A549 (cell line): ENCODE measurements at regions of chr16 and their contacts with region 1.

Region 1: DNA sequence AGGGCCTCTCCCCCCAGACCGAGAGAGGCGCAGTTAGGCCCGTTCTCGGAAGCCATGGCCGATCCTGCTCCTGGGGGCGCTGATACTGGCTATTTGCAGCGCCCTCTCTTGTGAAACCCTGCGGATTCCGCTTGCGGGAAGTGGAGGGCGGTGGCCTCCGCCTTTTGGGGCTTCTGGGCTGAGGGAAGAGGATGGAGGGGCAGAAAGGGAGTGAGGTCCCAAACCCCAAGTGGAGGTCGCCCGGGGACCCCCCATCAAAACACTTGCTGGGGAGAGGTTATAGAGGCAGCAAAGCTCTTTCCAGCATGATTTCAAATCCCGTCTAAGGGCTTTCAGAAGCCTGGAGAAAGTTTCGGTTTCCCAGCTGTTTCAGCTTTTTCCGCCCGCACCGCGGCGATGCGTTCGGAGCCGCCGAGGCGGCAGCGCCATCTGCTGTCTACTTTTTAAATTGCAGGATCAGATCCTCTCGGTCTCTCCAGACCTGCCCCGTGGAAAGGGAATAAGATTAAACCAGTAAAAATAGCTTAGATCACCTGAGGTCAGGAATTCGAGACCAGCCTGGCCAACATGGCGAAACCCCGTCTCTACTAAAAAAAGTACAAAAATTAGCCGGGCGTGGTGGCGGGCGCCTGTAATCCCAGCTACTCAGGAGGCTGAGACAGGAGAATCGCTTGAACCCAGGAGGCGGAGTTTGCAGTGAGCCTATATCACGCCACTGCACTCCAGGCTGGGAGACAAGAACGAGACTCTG is 15.8 kb downstream of the SNX20 start:
- DNase-seq: peak; percentile 56 to 74
- ATAC-seq: peak; percentile 81 to 95
- H3K4me3 ChIP-seq: peak overlapping the region; percentile 26; the same call in 1 of the 3 replicates
- H3K27ac ChIP-seq: peak overlapping the region in 1 of 2 experiments; percentile 53; a peak in 3 of 6 replicates
- H3K4me1 ChIP-seq: no peaks in the 10 kb centered on the region
- CTCF ChIP-seq: peak; percentile 88
- EP300 ChIP-seq: no peak
- POLR2A ChIP-seq: no peak
- RAD21 ChIP-seq: peak; percentile 80 to 85

Region 2: GRCh38 chr16:50326949-50327402 is 338.3 kb before region 1 on chr16:
- CTCF ChIA-PET with region 1: interaction called, 16 read pairs
- POLR2A ChIA-PET with region 1: no interaction called
- DNase-seq: peak in 1 of 2 experiments; percentile 58
- ATAC-seq: peak; percentile 75 to 89; a peak in 5 of 6 replicates
- H3K4me3 ChIP-seq: no peak overlapping the region
- H3K27ac ChIP-seq: no peak overlapping the region
- H3K4me1 ChIP-seq: no peaks in the 10 kb centered on the region
- CTCF ChIP-seq: peak; percentile 46
- EP300 ChIP-seq: no peak
- POLR2A ChIP-seq: no peak
- RAD21 ChIP-seq: peak; percentile 40 to 56; a peak in 4 of 5 replicates

Region 3: GRCh38 chr16:50611332-50611934 is 53.9 kb before region 1 on chr16:
- CTCF ChIA-PET with region 1: interaction called, 13 read pairs
- POLR2A ChIA-PET with region 1: no interaction called
- DNase-seq: no peak
- ATAC-seq: peak in 1 of 2 experiments; percentile 55; a peak in 3 of 6 replicates
- H3K4me3 ChIP-seq: no peak overlapping the region
- H3K27ac ChIP-seq: no peak overlapping the region
- H3K4me1 ChIP-seq: no peaks in the 10 kb centered on the region
- CTCF ChIP-seq: no peak
- EP300 ChIP-seq: no peak
- POLR2A ChIP-seq: no peak
- RAD21 ChIP-seq: no peak

Region 4: DNA sequence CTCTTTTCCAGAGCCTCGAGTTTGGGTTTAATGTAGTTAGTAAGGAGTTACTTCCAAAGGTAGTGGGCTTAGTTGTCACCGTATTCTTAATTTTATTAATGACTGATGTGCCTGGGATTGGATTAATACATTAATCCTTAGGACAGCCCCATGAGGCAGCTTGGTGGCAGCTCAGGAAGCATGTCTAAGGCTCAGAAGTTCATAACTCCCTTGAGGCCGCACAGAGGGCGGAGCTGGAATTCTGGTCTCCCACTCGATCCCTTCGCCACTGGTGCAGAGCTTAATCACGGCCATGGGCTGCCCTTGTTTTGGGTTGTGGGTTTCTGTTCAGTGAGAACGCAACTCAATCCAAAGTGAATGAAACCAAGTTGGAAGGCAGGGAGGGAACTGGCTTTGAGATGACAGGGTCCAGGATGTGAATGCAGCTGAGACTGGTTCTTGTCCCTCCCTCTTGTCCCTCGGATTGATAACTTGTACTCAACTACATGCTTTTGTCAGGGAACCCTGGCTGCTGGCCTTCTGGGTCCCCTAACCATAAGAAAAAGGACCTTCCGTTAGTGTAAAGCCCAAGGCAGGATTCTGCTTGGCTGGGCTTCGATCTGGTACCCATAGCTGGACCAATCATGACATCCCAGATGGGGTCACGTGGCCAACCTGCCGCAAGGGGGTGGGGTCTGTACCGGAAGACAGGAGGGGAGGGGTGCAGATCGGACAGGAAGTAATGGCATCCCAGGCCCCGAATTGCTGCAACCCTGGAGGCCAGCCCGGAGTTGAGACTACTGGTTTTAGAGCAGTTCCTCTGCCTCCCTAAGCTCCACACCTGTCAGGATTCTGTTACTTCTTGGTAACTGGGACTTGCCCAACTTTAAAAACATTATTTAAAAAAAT is 29.6 kb before region 1 on chr16:
- CTCF ChIA-PET with region 1: interaction called, 19 read pairs
- POLR2A ChIA-PET with region 1: no interaction called
- DNase-seq: peak in 1 of 2 experiments; percentile 20
- ATAC-seq: peak in 1 of 2 experiments; percentile 53; a peak in 3 of 6 replicates
- H3K4me3 ChIP-seq: no peak overlapping the region
- H3K27ac ChIP-seq: no peak overlapping the region
- H3K4me1 ChIP-seq: no peaks in the 10 kb centered on the region
- CTCF ChIP-seq: no peak
- EP300 ChIP-seq: no peak
- POLR2A ChIP-seq: no peak
- RAD21 ChIP-seq: no peak

Region 5: DNA sequence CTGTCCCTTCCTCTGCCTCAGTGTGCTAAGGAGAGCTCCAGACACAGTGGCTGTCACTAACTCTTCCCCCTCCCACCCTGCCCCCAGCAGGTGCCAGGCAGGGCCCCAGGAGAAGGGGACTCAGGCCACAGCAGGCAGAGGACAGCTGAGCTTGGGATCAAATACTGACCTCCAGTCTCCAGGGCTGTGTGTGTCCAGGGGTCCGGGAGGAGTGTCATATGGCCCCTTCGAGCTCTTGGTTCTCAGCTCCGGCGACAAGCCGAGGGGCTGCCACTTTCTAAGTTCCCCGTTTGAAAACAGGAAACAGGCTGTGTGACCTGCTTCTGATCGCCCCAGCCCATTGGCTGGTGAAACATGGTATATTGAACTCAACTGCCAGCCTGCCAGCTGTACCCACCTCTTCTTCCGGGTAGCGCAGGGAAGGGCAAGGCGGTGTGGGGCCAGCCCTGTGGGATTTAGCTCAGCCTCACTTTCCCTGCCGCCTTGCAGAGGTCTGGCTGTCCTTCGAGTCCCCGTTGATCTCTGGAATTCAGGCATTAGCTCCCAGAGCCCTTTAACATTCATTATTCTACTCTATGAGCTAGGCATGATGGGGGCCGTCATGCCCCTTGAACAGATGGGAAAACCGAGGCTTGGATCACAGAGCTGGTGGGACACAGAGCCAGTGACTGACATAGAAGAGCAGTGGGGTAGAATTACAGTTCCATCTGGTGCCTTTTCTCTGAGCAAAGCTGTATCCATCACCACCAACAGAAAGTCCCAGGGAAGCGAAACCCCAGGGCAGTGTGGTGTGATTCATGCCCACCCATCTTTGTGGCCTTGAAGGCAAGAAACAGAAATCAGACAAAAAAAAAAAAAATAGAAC is 15.9 kb after region 1 on chr16 and contains the start of gene SNX20:
- CTCF ChIA-PET with region 1: interaction called, 24 read pairs
- POLR2A ChIA-PET with region 1: no interaction called
- DNase-seq: no peak
- ATAC-seq: no peak
- H3K4me3 ChIP-seq: no peak within 1 kb of the TSS
- H3K27ac ChIP-seq: no peak within 1 kb of the TSS
- H3K4me1 ChIP-seq: no peaks in the 10 kb centered on the region
- CTCF ChIP-seq: no peak
- EP300 ChIP-seq: no peak
- POLR2A ChIP-seq: no peak
- RAD21 ChIP-seq: no peak
- polyA plus RNA-seq, gene SNX20: not detected in 2 replicates

Region 6: GRCh38 chr16:50747207-50747956 is 82.1 kb after region 1 on chr16:
- CTCF ChIA-PET with region 1: interaction called, 11 read pairs
- POLR2A ChIA-PET with region 1: no interaction called
- DNase-seq: peak in 1 of 2 experiments; percentile 22
- ATAC-seq: peak; percentile 43 to 46; a peak in 4 of 6 replicates
- H3K4me3 ChIP-seq: no peak overlapping the region
- H3K27ac ChIP-seq: no peak overlapping the region
- H3K4me1 ChIP-seq: peaks cover 3% of the 10 kb centered on the region; the same call in 1 of the 3 replicates
- CTCF ChIP-seq: no peak; the same call in 2 of the 3 replicates
- EP300 ChIP-seq: no peak
- POLR2A ChIP-seq: no peak
- RAD21 ChIP-seq: peak; percentile 39 to 47; a peak in 4 of 5 replicates